ENCODE measurements at regions of chr19 and their contacts with region 1.

Region 1: DNA sequence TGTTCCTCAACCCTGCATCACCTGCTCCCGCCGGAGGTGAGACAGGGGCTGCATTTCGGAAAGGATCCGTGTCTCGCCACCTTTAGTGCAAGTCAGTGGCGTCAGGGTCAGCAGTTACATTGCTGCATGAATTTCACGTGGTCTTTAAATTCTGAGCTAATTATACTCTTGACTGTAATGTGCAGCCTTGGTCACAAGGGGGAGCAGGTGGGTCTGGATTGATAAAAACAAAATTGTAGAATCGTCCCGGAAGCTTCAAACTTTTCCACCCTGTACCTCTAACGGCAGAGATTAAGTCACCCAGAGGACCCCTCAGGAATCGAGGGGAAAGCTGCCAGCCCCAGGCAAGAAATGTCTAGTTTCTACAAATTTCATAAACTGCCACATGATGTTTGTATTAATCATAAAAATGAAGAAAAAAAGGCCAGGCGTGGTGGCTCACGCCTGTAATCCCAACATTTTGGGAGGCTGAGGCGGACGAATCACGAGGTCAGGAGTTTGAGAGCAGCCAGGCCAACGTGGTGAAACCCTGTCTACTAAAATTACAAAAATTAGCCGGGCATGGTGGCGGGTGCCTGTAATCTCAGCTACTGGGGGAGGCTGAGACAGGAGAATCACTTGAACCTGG is 20.2 kb downstream of the BBC3 start:
- DNase-seq: peak in 2 of 3 donors; percentile 61 to 83
- ATAC-seq: peak; percentile 53 to 68
- H3K4me3 ChIP-seq: no peak overlapping the region
- H3K27ac ChIP-seq: peak overlapping the region; percentile 67
- H3K4me1 ChIP-seq: no peaks in the 10 kb centered on the region
- H3K27me3 ChIP-seq: no peaks in the 10 kb centered on the region

Region 2: DNA sequence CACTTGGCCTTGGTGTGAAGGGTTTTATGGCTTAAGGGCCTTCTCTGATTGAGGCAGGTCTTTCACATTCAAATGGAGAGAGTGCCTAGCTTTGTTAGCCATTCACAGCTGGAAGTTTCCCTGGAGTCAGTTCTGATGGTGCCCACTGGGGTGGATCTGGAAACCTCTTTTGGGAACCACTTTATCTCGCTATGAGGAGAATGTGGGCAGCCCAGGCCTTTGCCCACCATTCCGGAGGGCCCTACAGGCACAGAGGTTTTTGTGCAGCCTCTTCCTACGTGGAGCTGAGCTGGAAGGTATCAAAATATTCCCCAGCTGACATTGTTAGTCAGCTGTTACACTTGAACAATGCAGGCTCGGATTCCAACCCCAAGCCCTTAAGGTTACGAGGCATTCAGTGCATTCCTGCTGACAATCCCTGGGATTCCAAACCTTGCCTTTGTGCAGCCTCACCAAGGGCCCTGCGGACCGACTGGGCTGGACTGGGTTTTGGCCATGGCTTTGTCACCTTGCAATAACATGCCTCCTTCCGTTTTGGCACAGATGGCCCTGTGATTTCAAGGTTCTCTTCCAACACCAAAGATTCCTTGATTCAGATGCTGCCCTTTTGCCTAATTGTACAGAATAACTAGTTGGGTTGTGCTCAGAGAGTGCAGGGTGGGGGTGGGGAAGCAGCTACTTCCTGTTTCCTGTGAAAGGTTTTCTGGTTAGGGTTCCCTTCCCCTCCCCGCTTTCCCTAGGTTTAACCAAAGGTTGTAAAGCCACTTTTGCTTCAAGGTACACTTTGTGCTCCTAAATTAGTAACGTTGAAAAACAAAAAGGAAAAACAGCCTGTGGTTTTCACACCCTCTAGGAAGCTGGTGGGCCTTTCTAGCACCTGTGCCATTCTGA is 53.1 kb before region 1 on chr19:
- intact Hi-C with region 1: loop called in 1 of 4 experiments (anchors 10 kb)
- DNase-seq: peak; percentile 66 to 77 (median 74)
- ATAC-seq: peak; percentile 78 to 94
- H3K4me3 ChIP-seq: no peak overlapping the region
- H3K27ac ChIP-seq: peak overlapping the region; percentile 87
- H3K4me1 ChIP-seq: peaks cover 21% of the 10 kb centered on the region
- H3K27me3 ChIP-seq: no peaks in the 10 kb centered on the region

Region 3: DNA sequence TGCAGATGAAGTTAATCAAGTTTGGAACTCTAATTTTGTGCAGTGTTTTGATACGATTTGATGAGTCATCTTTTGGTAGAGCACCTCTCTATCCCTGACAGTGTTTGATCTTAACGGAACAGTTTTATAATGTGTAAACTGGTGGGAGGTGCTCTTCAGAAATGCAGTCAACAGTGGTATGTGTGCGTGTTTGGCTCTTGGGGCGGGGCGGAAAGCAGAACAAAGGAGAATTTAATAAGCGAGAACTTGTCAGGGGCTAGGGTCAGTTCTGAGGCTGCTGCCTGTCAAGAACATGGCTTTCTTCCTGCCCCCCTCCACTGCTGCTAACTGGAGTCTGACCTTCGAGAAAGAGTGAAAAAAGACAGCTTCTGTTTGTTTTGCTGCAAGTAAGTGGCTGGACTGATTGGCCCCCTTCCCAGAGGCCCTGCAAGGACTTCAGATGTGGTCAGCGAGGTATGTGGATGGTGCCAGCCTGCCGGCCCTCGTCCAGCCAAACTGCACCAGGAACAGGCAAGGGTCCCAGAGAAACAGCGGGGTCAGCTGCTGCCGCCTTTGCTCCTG is 20.6 kb before region 1 on chr19:
- intact Hi-C with region 1: loop called in 1 of 4 experiments (anchors 2 kb)
- DNase-seq: peak; percentile 67 to 87 (median 84)
- ATAC-seq: peak; percentile 67 to 72
- H3K4me3 ChIP-seq: no peak overlapping the region
- H3K27ac ChIP-seq: peak overlapping the region; percentile 76
- H3K4me1 ChIP-seq: peaks cover 4% of the 10 kb centered on the region
- H3K27me3 ChIP-seq: no peaks in the 10 kb centered on the region

Measured in right cardiac atrium (tissue), 5 donors.